RWPE1 (cell line): ENCODE measurements at regions of chr5 and their contacts with region 1.

Region 1: DNA sequence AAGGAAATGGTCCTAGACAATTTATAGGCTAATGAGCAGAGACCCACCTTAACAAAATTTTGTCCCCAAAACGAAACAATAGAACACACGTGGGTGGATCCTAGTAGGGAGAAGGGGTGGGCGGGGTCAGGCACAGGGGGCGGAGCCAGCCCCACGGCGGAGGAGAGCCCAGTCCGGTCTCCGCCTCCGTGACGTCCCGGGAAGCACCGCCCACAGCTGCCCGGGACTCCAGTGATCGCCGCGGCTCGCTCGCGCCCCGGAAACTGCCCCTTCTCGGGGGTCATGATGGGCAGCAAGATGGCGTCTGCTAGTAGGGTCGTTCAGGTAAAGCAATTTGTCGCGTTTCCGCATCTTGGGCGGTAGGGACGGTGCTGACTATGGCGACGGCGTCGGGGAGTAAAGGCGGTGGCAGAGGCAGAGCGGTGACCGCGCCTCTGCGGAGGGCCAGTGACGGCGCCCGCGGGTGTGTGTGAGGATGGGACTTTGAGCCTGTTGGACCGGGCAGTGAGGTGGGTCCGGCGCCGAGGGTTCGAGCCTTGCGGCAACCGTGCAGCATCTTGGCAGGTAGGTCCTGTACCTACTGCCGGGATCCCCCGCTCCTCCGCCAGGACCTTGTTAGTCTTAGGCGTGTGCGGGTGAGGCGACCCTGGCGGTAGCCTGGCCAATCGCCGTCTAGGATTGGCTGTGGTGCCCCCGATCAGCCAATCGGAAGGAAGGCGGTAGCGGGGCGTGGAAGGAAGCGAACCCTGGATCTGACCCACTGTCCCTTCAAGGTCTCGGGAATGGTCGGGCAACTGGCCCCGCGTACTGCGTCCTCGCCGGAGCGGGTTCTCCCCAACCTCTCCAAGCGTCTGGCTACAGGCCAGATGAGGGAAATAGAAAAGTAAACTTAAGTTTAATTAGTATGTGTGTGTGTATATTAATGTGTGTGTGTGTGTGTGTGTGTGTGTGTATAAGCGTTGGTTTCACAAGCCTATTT is 16.8 kb upstream of the CDK7 start:
- DNase-seq: peak; percentile 99
- H3K27ac ChIP-seq: peak overlapping the region; percentile 90
- CTCF ChIP-seq: no peak

Region 2: DNA sequence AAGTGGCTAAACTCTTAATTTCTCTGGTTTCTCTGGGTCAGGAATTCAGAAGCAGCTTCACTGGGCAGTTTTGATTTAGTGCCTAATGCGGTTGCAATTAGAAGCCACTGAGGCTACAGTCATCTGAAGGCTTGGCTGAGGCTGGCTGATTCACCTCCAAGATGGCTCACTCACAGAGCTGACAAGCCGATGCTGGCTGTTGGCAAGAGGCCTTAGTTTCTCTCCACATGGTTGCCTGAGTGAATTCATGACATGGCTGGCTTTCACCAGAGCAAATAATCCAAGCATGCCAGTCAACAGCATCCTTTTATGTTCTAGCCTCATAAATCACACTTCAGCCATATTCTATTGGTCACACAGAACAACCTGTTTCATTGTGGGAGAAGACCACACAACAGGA is 14.0 kb after region 1 on chr5:
- CTCF ChIA-PET with region 1: interaction called, 3 read pairs
- POLR2A ChIA-PET with region 1: interaction called, 13 read pairs
- DNase-seq: no peak
- H3K27ac ChIP-seq: peak overlapping the region; percentile 34
- CTCF ChIP-seq: no peak